HAP-1 (cell line): ENCODE measurements at regions of chr4 and their contacts with region 1.

Region 1: GRCh38 chr4:86895692-86896488 is 3.7 kb upstream of the C4orf36 start:
- DNase-seq: peak; percentile 32 to 86
- H3K4me3 ChIP-seq: no peak overlapping the region
- H3K4me1 ChIP-seq: peaks cover 16% of the 10 kb centered on the region
- H3K27me3 ChIP-seq: no peaks in the 10 kb centered on the region

Region 2: DNA sequence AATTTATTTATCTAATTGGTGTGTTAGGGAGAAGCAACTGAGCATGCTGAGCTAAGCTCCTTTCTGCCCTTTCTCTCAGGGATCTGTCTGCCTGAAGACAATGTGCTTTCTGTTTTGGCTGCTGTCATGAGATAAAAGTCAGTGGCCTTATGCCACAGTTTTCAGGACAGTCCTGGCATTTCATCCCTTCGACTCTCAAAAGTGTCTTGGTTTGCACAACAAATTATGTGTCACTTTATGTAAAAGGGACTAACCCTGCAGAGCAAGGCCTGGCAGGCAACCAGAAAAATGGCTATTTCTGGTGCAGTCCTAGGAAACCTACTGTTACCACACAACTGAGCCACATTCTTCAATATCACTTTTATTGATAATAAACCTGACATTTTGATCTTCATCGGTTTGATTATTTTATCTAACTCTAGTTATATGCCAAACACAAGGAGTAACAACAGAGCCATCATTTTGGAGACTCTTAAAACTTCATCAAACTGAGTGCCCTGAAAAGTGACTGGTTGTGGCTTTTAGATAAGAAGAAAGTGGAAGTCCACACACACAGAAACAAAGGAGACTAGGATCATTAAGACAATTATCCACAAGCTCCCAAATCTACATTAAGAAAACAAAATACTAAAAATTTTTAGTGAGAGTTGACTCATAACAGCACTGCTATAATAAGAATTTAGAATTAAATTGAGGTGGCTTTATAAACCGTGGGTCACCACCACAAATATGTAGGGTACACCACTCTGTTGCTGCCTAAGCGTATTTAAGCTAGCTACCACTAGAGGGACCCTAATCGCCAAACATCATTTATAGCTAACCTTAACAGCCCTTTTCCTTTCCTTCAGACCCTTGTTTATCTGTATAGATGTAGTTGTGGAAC is 397.7 kb before region 1 on chr4:
- in situ Hi-C with region 1: loop called (anchors 5 kb)
- DNase-seq: peak; percentile 37 to 59
- H3K4me3 ChIP-seq: no peak overlapping the region
- H3K4me1 ChIP-seq: peaks cover 8% of the 10 kb centered on the region
- H3K27me3 ChIP-seq: no peaks in the 10 kb centered on the region

Region 3: DNA sequence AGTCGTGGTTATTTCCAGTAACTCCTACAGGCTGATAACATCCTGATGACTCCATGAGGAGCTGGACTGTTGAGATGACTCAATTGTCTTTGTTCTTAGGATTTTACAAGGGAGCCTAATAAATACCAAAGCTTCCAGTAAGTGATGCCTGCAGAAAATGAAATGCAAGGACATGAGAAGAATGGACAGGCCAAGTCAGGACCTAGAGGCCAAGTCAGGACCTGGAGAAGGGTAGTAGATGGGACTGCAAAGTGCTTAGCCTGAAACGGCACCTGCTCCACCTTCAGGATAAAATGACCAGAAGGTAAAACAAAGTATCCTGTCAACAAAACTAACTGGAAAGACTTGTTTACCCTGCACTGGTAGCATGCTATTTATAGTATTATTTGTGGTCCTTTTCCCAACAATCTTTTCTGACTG is 40.3 kb before region 1 on chr4:
- in situ Hi-C with region 1: no loop called
- DNase-seq: no peak
- H3K4me3 ChIP-seq: no peak overlapping the region
- H3K4me1 ChIP-seq: no peaks in the 10 kb centered on the region
- H3K27me3 ChIP-seq: no peaks in the 10 kb centered on the region

Region 4: DNA sequence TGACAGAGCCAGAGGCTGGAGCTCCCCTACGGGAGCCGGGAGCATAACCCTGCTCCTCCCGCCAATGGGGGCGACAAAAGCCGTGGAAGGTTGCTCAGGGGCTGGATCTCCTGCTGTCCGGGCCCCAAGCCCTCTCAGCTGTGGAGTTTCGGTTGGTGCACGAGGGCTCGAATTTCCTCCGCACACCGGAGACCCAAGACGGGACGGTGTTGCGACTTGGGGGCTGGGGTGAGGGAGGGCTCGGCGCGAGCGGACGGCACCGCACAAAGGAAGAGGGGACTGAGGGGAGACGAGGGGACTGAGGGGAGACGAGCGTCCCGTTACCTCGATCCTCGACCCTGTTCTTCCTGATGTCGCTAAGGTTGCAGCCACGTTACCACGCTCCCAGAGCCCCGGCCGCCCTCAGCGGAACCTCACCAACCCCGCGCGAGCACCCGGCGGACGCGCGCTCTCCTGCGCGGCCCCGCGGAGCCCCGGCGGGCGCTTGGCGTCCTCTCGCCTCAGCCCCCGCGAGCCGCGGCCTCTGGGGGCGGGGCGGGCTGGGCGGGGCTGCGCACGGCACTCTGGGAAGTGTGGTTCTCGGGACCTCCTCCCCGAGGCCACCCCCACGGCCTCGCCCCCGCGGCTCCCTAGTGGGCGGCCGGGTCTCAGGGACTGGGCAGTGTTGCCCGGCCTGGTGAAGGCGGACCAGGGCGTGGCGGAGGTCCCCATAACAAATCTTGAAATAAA is 324.4 kb after region 1 on chr4 and contains the start of gene KLHL8:
- in situ Hi-C with region 1: no loop called
- DNase-seq: peak; percentile 77 to 90
- H3K4me3 ChIP-seq: peak within 1 kb of the TSS; percentile 89
- H3K4me1 ChIP-seq: peaks cover 13% of the 10 kb centered on the region
- H3K27me3 ChIP-seq: no peaks in the 10 kb centered on the region

Region 5: GRCh38 chr4:87679449-87680169 is 783.7 kb after region 1 on chr4:
- in situ Hi-C with region 1: no loop called
- DNase-seq: peak; percentile 44 to 65
- H3K4me3 ChIP-seq: no peak overlapping the region
- H3K4me1 ChIP-seq: no peaks in the 10 kb centered on the region
- H3K27me3 ChIP-seq: no peaks in the 10 kb centered on the region